Activated naive CD4-positive, alpha-beta T cell treated with anti-CD3 and anti-CD28 coated beads, Interleukin-2, amount 10 ng/mL, durations not matched to agents 7 days and 5 days (primary cell): ENCODE measurements at regions of chr6 and their contacts with region 1.

Region 1: DNA sequence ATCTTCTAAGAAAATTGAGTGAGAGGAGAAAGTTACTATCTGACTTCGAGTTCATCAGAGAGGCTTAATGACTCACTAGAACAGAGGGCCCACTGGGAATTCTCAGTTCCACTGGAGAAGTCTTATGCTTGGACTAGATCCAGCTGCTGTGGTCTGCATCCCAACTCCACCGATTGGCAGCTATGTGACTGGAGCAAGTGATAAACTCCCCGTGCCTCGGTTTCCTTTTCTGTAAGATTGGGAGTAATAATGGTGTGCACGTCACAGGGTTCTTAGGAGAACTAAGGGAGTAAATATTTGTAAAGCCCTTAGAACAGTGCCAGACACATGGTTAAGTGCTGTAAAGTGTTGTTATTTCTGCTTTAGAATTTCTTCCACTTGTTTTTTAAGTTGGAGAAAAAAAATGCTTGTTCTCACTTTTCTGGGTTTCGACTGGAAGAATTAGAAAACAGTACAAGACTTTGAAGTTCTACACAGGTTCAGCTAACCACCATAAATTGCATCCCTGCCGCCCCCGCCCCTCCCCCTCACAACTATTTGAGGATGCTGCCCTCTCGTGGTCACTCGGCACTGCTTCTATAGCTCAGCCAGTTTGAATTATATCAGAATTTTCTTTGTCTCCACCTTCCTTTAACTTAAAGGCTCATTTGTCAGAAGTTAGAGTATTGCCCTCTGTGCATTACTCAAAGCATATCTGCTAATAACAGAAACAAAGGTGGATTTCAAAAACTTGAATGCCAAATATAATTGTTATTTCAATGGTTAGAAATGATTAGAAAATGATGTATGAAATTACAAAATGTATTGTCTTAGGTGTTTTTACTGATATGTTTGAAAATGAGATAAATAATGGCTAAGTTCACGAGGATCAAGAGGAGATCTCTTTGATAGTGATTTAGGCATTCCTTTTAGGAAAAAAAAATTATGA is 95.0 kb upstream of the IFNGR1 start:
- DNase-seq: peak; percentile 78
- H3K4me3 Mint-ChIP-seq: no peak overlapping the region
- H3K27ac Mint-ChIP-seq: no peak overlapping the region
- H3K4me1 Mint-ChIP-seq: peaks cover 2% of the 10 kb centered on the region
- H3K27me3 Mint-ChIP-seq: peaks cover 4% of the 10 kb centered on the region

Region 2: DNA sequence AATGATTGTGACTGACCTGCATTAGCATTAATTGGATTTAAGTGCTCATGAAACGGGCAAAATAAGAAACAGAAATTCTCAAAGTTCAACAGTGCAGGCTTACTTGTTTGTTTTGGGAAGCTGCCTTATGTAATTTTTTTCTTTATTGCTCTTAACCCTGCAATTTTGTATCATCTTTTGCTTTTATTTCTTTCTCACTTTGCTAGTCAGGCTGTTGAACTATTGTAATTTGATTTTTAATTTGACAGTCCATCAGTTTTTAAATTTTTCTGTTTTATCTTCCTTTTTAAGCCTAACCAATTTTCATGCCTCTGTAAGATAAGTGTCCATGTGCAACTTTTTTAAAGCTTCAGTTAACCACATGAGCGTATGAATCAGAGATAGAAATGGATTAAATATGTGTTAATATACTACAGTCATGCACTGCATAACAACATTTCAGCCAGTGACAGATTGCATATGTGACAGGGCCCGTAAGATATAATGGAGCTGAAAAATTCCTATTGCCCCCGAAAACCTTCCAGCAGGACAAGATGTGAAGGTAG is 447.2 kb before region 1 on chr6:
- CTCF ChIA-PET with region 1: no interaction called
- DNase-seq: no peak
- H3K4me3 Mint-ChIP-seq: no peak overlapping the region
- H3K27ac Mint-ChIP-seq: no peak overlapping the region
- H3K4me1 Mint-ChIP-seq: no peaks in the 10 kb centered on the region
- H3K27me3 Mint-ChIP-seq: no peaks in the 10 kb centered on the region

Region 3: DNA sequence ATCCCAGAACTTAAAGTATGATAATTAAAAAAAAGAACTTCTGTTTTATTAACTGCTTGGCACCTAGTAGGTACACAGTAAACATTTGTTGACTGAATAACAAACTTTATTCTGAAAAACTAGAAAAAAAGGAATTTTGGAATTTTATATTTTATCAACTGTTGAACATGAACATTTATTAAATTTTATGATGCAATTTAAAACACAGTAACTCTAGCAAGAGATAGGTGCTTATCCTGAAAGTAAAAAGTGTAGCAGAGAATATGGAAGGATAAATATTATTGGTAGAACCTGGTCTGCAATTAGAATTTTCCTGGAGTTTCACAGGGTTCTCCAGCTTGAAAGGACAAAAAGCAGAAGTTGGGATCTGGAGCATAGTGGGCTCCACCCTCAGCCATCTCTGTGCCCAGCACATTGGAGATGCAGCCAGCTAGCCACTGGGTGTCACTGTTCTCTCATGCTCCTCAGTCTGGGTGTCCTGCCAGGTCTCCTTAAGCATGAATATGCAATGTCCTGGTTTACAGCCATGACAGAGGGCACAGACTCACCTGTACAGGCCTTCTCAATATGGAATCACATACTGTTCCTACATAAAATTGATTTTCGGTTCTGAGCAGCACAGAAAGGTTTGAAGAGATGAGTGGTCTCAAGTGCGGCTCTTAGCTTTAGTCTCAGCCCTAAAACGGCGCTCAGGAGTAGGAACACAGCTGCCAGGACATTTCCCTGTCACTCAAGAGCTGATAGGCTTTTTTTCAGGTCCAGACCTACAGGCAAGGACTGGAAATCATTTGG is 237.7 kb before region 1 on chr6:
- CTCF ChIA-PET with region 1: interaction called, 16 read pairs
- DNase-seq: peak; percentile 70
- H3K4me3 Mint-ChIP-seq: no peak overlapping the region
- H3K27ac Mint-ChIP-seq: no peak overlapping the region
- H3K4me1 Mint-ChIP-seq: no peaks in the 10 kb centered on the region
- H3K27me3 Mint-ChIP-seq: peaks cover 43% of the 10 kb centered on the region

Region 4: GRCh38 chr6:137094411-137095008 is 219.7 kb before region 1 on chr6:
- CTCF ChIA-PET with region 1: interaction called, 50 read pairs
- DNase-seq: peak; percentile 71
- H3K4me3 Mint-ChIP-seq: no peak overlapping the region
- H3K27ac Mint-ChIP-seq: no peak overlapping the region
- H3K4me1 Mint-ChIP-seq: peaks cover 17% of the 10 kb centered on the region
- H3K27me3 Mint-ChIP-seq: peaks cover 4% of the 10 kb centered on the region

Region 5: DNA sequence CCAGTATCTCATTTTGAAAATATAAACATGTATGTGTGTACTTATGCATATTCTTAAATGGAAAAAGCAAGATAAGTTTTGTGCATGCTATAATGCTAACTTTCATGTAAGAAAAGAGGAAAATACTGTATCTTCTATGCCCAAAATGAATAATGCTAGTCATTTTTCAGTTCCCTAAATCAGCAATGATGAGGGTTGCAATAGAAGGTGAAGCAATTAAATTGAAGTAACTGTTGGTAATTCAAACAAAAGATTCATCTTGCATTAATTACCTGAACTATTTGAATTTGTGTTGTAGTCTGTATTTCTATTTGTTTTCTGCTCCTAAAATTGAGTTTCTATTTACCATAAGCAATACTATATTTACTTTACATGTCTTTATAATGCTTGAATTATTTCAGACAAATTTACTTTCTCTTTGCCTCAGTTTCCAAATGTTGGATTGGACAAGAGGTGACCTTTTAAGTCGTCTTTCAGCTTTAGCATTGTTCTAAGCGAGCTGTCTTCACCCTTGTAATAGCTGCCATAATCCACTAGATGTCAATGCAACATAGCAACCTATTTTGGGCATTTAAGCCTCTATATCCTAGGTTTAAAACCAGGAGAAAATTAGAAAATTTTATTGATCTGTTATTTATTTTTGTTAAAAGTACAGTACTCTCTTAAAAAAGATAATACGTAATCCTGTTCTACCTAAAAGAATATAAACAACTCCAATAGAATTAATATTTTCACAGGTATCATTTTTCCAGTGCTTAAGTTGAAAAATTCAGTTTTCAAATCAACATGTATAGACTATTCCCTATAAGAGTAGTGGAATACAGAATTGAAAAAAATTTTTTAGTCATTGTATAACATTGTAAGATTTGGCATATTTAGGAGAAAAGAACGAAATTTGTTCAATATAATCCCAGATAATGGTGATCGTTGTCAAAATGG is 42.7 kb before region 1 on chr6:
- CTCF ChIA-PET with region 1: interaction called, 12 read pairs
- DNase-seq: no peak
- H3K4me3 Mint-ChIP-seq: no peak overlapping the region
- H3K27ac Mint-ChIP-seq: no peak overlapping the region
- H3K4me1 Mint-ChIP-seq: no peaks in the 10 kb centered on the region
- H3K27me3 Mint-ChIP-seq: peaks cover 17% of the 10 kb centered on the region

Region 6: GRCh38 chr6:137283940-137284810 is 30.0 kb before region 1 on chr6:
- CTCF ChIA-PET with region 1: interaction called, 11 read pairs
- DNase-seq: no peak
- H3K4me3 Mint-ChIP-seq: no peak overlapping the region
- H3K27ac Mint-ChIP-seq: no peak overlapping the region
- H3K4me1 Mint-ChIP-seq: no peaks in the 10 kb centered on the region
- H3K27me3 Mint-ChIP-seq: peaks cover 37% of the 10 kb centered on the region

Region 7: DNA sequence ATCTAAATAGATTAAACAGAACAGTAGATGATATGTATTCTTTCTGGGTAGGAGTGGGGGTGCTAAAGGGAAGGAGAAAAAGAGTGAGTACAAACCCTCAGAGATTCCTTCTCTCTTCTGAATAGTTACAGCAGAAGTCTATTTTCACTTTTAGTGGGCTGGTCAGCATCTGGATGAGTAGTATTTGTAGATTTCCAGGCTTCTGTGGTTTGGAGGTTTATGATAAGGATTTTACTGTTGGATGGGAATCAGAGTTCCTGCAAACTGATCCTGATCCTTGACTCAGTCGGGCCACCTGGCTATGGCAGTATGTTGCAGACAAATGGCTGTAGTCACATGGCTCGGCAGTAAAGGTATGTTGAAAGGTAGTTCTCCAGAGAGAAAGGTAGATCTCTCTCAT is 10.8 kb before region 1 on chr6:
- CTCF ChIA-PET with region 1: no interaction called
- DNase-seq: no peak
- H3K4me3 Mint-ChIP-seq: no peak overlapping the region
- H3K27ac Mint-ChIP-seq: no peak overlapping the region
- H3K4me1 Mint-ChIP-seq: no peaks in the 10 kb centered on the region
- H3K27me3 Mint-ChIP-seq: no peaks in the 10 kb centered on the region

Region 8: DNA sequence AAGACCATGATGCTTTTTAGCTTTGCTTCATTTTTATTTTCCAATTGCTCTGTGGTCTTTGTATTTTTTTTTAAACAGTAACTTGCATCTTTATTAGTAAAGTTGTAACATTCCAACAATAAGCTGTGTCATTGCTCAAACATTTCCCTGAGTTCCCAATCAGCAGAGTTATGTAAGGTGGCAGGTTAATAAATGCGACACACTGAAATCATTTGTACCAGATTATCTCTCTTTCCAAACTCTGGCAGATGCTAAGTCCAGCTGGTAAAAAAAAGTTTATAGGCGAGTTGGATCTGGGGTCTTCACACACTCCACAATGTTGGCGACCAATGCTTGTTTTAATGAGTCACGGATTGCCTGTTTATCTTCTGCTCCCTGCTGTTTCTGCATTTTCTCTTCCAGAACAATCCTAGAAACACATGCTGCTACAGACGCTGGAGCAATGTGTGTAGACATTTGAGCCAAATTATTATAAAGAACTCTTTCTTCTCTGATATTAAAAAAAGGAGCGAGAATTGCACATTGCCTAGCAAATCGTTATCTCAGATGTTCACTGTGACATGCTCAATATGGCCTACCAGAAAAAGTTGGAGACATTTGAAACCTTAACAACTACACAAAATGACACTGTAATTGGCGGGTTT is 18.6 kb after region 1 on chr6:
- CTCF ChIA-PET with region 1: interaction called, 11 read pairs
- DNase-seq: no peak
- H3K4me3 Mint-ChIP-seq: no peak overlapping the region
- H3K27ac Mint-ChIP-seq: no peak overlapping the region
- H3K4me1 Mint-ChIP-seq: no peaks in the 10 kb centered on the region
- H3K27me3 Mint-ChIP-seq: peaks cover 35% of the 10 kb centered on the region

Region 9: DNA sequence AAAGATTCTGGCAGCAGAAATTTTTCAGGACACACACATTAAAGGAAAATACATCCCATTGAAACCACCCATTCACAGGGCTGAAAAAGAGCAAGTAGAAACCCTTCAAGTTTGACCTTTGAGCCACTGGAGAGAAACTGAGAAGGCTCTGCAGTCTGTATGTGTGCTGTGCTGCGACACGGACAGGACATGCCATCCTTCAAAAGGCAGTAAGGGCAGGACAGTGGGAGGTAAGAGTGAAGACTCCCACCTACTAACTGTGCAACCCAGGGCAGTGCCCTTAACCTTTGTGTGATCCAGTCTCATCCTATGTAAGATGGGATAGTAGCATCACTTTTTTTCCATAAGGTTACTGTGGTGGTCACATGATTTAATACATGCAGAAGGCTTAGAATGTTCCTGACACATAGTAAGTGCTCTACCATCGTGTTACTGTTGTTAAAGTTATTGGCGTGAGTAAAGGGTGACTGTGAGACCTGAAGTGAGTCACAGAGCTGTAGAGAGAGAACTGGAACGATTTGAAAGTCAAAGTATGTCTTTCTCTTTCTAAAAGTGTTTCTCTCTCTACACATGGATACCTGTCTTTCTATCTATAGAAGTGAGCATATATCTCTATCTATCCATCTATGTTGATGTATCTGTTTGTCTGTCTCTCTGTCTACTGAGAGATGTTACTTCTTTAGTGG is 333.7 kb after region 1 on chr6:
- CTCF ChIA-PET with region 1: no interaction called
- DNase-seq: no peak
- H3K4me3 Mint-ChIP-seq: no peak overlapping the region
- H3K27ac Mint-ChIP-seq: no peak overlapping the region
- H3K4me1 Mint-ChIP-seq: no peaks in the 10 kb centered on the region
- H3K27me3 Mint-ChIP-seq: peaks cover 17% of the 10 kb centered on the region